Psoas muscle (tissue), 8 donors: ENCODE measurements at regions of chr3 and their contacts with region 1.

Region 1: DNA sequence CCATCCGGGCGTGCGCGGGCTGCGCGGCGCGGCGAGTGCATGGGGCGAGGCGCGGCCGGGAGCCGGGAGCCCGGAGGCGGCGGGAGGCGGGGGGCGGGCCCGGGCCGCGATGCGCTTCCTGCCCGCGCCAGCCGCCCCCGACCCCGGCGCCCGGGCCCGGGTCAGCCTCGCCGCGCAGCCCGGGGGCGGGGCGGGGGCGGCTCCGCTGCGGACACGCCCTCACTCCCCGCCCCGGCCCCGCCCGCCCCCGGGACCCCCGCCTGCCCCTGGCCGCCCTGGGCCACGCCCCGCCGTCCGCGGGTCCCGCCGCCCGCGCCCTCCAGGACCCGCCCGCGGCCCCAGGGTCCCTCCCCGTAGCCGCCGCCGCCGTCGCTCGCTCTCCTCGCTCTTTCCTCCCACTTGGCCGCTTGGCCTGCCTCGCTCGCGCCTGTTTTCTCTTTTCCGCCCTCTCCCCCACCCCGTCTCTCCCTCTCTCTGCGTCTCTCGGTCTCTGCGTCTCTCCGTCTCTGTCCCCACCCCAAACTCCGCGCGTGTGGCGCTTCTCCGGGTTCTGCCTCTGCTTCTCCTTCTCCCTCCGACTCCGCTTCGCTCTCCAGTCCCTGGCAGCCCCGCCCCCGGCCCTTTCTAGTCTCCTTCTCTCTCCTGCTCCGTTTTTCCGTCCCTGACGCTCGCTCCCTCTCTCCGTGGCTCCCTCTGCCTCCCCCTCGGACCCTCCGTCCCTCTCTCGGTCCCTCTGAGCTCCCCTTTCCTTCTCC is at the start of gene PLXND1:
- DNase-seq: peak; percentile 79 to 87
- ATAC-seq: peak; percentile 39 to 56 (median 48)
- H3K4me3 ChIP-seq: peak within 1 kb of the TSS; percentile 68
- H3K27ac ChIP-seq: peak within 1 kb of the TSS; percentile 75
- H3K4me1 ChIP-seq: peaks cover 22% of the 10 kb centered on the region
- H3K27me3 ChIP-seq: peaks cover 0 to 9% (median 0%) of the 10 kb centered on the region in 3 donors
- CTCF ChIP-seq: no peak
- total RNA-seq, gene PLXND1: 28.2 to 49.9 (median 31.9) TPM

Region 2: DNA sequence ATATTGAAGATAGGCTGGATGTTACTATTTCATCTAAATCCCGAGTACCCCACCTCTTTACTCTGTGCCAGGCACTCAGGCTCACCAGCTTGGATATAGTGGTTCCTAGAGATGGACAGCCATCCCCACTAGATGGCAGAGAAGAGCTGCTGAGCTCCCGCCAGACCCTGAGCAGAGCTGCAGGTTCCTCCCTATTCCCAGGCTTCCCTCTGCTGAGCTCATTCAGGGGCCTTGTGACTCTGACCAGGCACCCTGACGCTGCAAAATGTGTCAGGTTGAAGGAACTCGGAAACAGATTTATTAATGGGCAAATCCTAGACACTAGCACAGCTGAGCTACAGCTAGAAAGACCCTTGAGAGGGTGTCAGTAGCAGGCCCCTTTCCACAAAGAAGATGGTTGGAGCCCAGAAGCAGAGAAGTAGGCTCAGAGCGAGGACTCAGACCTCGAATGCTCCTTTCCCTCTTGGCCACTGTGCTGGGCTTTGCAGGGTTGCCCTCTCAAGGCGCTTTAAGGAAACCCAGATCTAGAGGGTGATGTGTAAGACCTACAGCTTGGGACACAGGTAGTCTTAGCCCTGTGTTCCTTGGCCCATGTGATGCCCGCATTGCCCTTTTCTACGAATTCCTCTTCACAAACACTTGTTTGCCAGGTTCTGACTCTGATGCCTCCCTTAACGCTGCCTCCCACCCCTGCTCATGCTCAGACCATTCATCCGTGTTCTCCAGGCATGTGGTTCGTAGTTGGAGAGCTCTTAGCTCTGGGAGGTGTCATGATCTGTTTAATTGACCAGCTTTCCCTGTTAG is 116.4 kb before region 1 on chr3:
- intact Hi-C with region 1: loop called in 1 of 2 experiments (anchors 5 kb)
- DNase-seq: peak; percentile 81 to 88
- ATAC-seq: peak; percentile 87
- H3K4me3 ChIP-seq: no peak overlapping the region
- H3K27ac ChIP-seq: peak overlapping the region; percentile 72
- H3K4me1 ChIP-seq: peaks cover 37% of the 10 kb centered on the region
- H3K27me3 ChIP-seq: no peaks in the 10 kb centered on the region
- CTCF ChIP-seq: peak; percentile 88

Region 3: GRCh38 chr3:129507181-129507831 is 99.5 kb before region 1 on chr3:
- intact Hi-C with region 1: loop called in 1 of 2 experiments (anchors 5 kb)
- DNase-seq: peak in 1 of 2 donors; percentile 52
- ATAC-seq: no peak
- H3K4me3 ChIP-seq: no peak overlapping the region
- H3K27ac ChIP-seq: no peak overlapping the region
- H3K4me1 ChIP-seq: peaks cover 35% of the 10 kb centered on the region
- H3K27me3 ChIP-seq: no peaks in the 10 kb centered on the region
- CTCF ChIP-seq: no peak